Caco-2 (cell line): ENCODE measurements at regions of chr2 and their contacts with region 1.

Region 1: DNA sequence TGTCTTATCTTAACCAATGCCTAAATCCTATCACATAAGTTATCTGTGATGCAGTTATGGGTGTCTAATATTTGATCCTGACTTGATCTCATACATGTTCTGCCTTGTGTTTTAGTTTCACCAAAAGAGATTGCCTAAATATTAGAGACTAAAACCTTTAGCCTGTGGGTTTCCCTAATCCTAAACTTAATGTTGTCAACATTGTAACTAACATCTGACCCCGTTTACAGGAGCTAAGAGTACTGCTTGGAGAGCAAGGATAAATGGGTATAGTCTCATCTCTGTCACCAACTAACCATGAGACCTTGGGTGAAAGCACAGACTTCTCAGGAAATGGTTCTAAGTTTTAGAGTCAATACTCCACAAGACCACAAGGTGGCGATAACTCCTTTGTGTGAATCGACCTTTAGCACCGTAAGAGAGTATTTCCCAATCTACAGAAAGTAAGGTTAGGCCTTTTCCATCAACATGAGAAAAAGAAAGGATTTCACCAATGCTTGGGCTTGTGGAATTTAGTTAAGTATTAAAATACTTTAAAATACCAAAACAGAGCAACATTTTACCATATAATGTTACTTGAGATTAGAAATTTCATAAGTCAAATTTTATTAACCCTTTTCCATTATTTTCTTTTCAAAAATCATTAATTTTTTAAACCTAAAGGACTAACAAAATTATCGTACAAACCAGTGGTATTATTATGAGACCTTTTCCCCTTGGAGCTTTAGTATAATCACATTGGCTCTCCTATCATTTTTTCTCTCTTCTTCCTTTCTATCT is 60.5 kb downstream of the G6PC2 start:
- DNase-seq: peak; percentile 40 to 73
- H3K4me3 ChIP-seq: no peak overlapping the region
- H3K4me3 Mint-ChIP-seq: no peak overlapping the region
- H3K27ac Mint-ChIP-seq: no peak overlapping the region
- H3K4me1 ChIP-seq: no peaks in the 10 kb centered on the region
- H3K4me1 Mint-ChIP-seq: no peaks in the 10 kb centered on the region
- H3K27me3 ChIP-seq: no peaks in the 10 kb centered on the region
- H3K27me3 Mint-ChIP-seq: peaks cover 3% of the 10 kb centered on the region
- CTCF ChIP-seq: peak; percentile 76 to 80

Region 2: GRCh38 chr2:168731616-168732015 is 230.0 kb before region 1 on chr2:
- CTCF ChIA-PET with region 1: no interaction called
- POLR2A ChIA-PET with region 1: no interaction called
- intact Hi-C with region 1: no loop called
- DNase-seq: no peak
- H3K4me3 ChIP-seq: no peak overlapping the region
- H3K4me3 Mint-ChIP-seq: no peak overlapping the region
- H3K27ac Mint-ChIP-seq: no peak overlapping the region
- H3K4me1 ChIP-seq: peaks cover 6% of the 10 kb centered on the region; the same call in 1 of the 2 replicates
- H3K4me1 Mint-ChIP-seq: peaks cover 10% of the 10 kb centered on the region
- H3K27me3 ChIP-seq: no peaks in the 10 kb centered on the region
- H3K27me3 Mint-ChIP-seq: no peaks in the 10 kb centered on the region
- CTCF ChIP-seq: no peak

Region 3: DNA sequence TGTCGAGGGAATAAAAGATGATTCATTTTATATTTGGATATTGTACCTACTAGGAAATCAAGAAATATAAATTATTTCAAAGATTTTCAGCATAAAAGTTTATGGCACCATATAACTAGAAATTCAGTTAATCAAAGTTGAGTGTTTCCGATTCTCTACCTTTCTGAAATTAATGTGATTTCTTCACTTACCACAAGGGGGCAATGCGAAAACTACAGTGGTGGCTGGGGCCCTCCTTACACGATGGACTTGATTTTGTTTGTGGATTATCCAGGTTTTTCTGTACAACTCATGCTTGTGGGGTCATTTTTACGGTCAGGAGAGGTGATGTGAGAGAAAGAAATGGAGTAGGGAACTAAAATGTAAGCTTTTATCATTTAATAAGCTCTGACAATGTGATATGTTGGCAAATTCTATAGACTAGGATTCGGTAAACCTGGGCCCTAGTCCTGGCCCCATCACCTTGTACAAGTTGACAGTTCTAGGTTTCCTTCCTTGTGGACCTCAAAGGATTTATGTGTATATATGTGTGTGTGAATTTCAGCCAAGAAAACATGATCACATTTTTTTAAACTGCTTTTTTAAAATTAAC is 12.9 kb before region 1 on chr2:
- CTCF ChIA-PET with region 1: no interaction called
- POLR2A ChIA-PET with region 1: no interaction called
- intact Hi-C with region 1: no loop called
- DNase-seq: peak in 1 of 2 experiments; percentile 24
- H3K4me3 ChIP-seq: no peak overlapping the region
- H3K4me3 Mint-ChIP-seq: no peak overlapping the region
- H3K27ac Mint-ChIP-seq: no peak overlapping the region
- H3K4me1 ChIP-seq: no peaks in the 10 kb centered on the region
- H3K4me1 Mint-ChIP-seq: no peaks in the 10 kb centered on the region
- H3K27me3 ChIP-seq: no peaks in the 10 kb centered on the region
- H3K27me3 Mint-ChIP-seq: peaks cover 16% of the 10 kb centered on the region
- CTCF ChIP-seq: peak; percentile 49

Region 4: DNA sequence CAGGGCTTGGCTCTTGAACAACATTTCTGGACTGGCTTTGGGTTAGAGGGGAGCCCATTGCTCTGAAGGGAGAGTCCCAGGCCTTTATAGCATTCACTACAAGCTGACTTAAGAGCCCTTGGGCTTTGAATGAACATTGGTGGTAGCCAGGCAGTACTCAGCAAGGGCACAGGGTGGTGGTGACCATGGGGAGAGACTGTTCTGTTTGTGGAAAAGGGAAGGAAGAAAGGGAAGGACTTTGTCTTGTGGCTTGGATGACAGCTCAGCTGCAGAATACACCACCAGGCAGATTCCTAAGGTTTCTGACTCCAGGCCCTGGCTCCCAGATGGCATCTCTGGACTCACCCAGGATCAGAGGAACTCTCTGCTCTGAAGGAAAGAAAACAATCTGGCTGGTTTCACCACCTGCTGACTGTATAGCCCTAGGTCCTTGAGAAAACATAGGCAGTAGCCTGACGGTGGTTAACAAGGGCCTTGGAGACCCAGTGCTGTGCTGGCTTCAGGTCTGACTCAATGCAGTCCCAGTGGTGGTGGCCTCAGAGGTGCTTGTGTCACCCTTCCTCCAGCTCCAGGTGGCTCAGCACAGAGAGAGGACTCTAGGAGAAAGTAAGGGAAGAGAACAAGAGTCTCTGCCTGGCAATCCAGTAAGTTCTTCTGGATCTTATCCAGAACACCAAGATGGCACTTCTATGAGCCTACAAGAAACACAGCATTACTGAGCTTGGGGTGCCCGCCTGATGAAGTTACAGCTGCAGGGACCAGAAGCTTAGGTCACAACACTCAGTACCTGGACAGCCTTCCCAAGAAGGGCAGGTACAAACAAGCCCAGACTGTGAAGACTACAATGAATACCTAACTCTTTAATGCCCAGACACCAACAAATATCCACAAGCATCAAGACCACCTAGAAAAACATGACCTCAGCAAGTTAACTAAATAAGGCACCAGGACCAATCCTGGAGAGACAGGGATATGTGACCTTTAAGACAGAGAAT is 85.9 kb after region 1 on chr2:
- CTCF ChIA-PET with region 1: no interaction called
- POLR2A ChIA-PET with region 1: no interaction called
- intact Hi-C with region 1: loop called (anchors 5 kb)
- DNase-seq: no peak
- H3K4me3 ChIP-seq: no peak overlapping the region
- H3K4me3 Mint-ChIP-seq: no peak overlapping the region
- H3K27ac Mint-ChIP-seq: no peak overlapping the region
- H3K4me1 ChIP-seq: no peaks in the 10 kb centered on the region
- H3K4me1 Mint-ChIP-seq: no peaks in the 10 kb centered on the region
- H3K27me3 ChIP-seq: no peaks in the 10 kb centered on the region; the same call in 1 of the 2 replicates
- H3K27me3 Mint-ChIP-seq: peaks cover 10% of the 10 kb centered on the region
- CTCF ChIP-seq: no peak

Region 5: GRCh38 chr2:169087757-169088379 is 126.2 kb after region 1 on chr2:
- CTCF ChIA-PET with region 1: no interaction called
- POLR2A ChIA-PET with region 1: no interaction called
- intact Hi-C with region 1: loop called (anchors 5 kb)
- DNase-seq: no peak
- H3K4me3 ChIP-seq: no peak overlapping the region
- H3K4me3 Mint-ChIP-seq: no peak overlapping the region
- H3K27ac Mint-ChIP-seq: no peak overlapping the region
- H3K4me1 ChIP-seq: no peaks in the 10 kb centered on the region
- H3K4me1 Mint-ChIP-seq: no peaks in the 10 kb centered on the region
- H3K27me3 ChIP-seq: no peaks in the 10 kb centered on the region
- H3K27me3 Mint-ChIP-seq: peaks cover 10% of the 10 kb centered on the region
- CTCF ChIP-seq: no peak

Region 6: GRCh38 chr2:169131587-169132512 is 170.2 kb after region 1 on chr2:
- CTCF ChIA-PET with region 1: no interaction called
- POLR2A ChIA-PET with region 1: no interaction called
- intact Hi-C with region 1: loop called (anchors 1 kb)
- DNase-seq: peak in 1 of 2 experiments; percentile 39
- H3K4me3 ChIP-seq: no peak overlapping the region
- H3K4me3 Mint-ChIP-seq: no peak overlapping the region
- H3K27ac Mint-ChIP-seq: no peak overlapping the region
- H3K4me1 ChIP-seq: no peaks in the 10 kb centered on the region
- H3K4me1 Mint-ChIP-seq: no peaks in the 10 kb centered on the region
- H3K27me3 ChIP-seq: no peaks in the 10 kb centered on the region
- H3K27me3 Mint-ChIP-seq: no peaks in the 10 kb centered on the region
- CTCF ChIP-seq: peak; percentile 63 to 79